ENCODE measurements at regions of chr11 and their contacts with region 1.

Region 1: DNA sequence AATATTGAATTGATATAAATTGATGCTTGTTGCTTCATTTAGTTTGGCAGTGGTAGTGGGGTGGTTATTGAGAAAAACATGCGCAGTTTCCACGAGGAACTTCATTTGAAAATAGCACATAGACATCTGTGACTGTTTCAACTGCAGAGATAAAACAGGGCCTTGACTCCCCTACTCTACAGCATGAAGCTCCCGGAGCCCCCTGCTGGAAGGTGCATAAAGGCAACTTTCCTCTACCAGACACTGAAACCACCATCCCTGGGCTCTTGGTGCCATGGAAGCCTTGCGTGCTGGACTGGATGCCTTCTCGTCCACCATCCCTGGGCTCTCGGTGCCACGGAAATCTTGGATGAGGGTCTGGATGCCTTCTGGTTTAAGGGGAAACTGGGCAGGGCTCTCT is 195.9 kb downstream of the CSNK2A3 start:
- DNase-seq: peak; percentile 64
- ATAC-seq: peak; percentile 47
- H3K4me3 Mint-ChIP-seq: no peak overlapping the region
- H3K27ac Mint-ChIP-seq: no peak overlapping the region
- H3K4me1 Mint-ChIP-seq: peaks cover 15% of the 10 kb centered on the region
- H3K27me3 Mint-ChIP-seq: no peaks in the 10 kb centered on the region
- CTCF ChIP-seq: peak; percentile 46

Region 2: DNA sequence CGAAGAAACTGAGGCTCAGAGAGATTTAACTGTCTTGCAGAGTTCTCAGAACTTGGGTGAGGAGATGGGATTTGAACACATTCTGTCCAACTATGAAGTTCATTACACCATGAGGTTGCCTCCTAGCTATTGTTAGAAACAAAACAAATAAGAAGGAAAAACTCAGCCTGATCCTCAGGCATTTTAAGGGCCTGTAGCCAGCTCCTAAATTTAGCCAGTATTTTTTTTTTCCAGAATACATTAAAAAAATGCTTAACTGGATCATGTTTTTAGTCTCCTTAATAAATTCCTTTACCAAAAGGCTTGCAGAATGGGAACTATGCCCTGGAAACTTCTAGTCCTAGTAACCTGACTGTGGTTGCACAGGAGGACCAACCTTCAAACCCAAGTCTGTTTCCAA is 16.1 kb before region 1 on chr11:
- CTCF ChIA-PET with region 1: interaction called, 12 read pairs
- POLR2A ChIA-PET with region 1: no interaction called
- intact Hi-C with region 1: no loop called
- DNase-seq: no peak
- ATAC-seq: no peak
- H3K4me3 Mint-ChIP-seq: no peak overlapping the region
- H3K27ac Mint-ChIP-seq: no peak overlapping the region
- H3K4me1 Mint-ChIP-seq: peaks cover 14% of the 10 kb centered on the region
- H3K27me3 Mint-ChIP-seq: no peaks in the 10 kb centered on the region
- CTCF ChIP-seq: no peak

Region 3: GRCh38 chr11:11171285-11171684 is 14.1 kb after region 1 on chr11:
- CTCF ChIA-PET with region 1: interaction called, 19 read pairs
- POLR2A ChIA-PET with region 1: no interaction called
- intact Hi-C with region 1: no loop called
- DNase-seq: no peak
- ATAC-seq: no peak
- H3K4me3 Mint-ChIP-seq: no peak overlapping the region
- H3K27ac Mint-ChIP-seq: no peak overlapping the region
- H3K4me1 Mint-ChIP-seq: peaks cover 18% of the 10 kb centered on the region
- H3K27me3 Mint-ChIP-seq: no peaks in the 10 kb centered on the region
- CTCF ChIP-seq: no peak

Region 4: GRCh38 chr11:11182286-11182685 is 25.1 kb after region 1 on chr11:
- CTCF ChIA-PET with region 1: no interaction called
- POLR2A ChIA-PET with region 1: no interaction called
- intact Hi-C with region 1: no loop called
- DNase-seq: no peak
- ATAC-seq: no peak
- H3K4me3 Mint-ChIP-seq: no peak overlapping the region
- H3K27ac Mint-ChIP-seq: no peak overlapping the region
- H3K4me1 Mint-ChIP-seq: no peaks in the 10 kb centered on the region
- H3K27me3 Mint-ChIP-seq: peaks cover 6% of the 10 kb centered on the region
- CTCF ChIP-seq: no peak

Region 5: GRCh38 chr11:11230802-11231562 is 73.8 kb after region 1 on chr11:
- CTCF ChIA-PET with region 1: no interaction called
- POLR2A ChIA-PET with region 1: no interaction called
- intact Hi-C with region 1: no loop called
- DNase-seq: peak; percentile 50
- ATAC-seq: peak; percentile 66
- H3K4me3 Mint-ChIP-seq: no peak overlapping the region
- H3K27ac Mint-ChIP-seq: no peak overlapping the region
- H3K4me1 Mint-ChIP-seq: no peaks in the 10 kb centered on the region
- H3K27me3 Mint-ChIP-seq: peaks cover 5% of the 10 kb centered on the region
- CTCF ChIP-seq: peak; percentile 58

Region 6: GRCh38 chr11:11265994-11266606 is 108.9 kb after region 1 on chr11:
- CTCF ChIA-PET with region 1: no interaction called
- POLR2A ChIA-PET with region 1: no interaction called
- intact Hi-C with region 1: no loop called
- DNase-seq: peak; percentile 74
- ATAC-seq: peak; percentile 84
- H3K4me3 Mint-ChIP-seq: no peak overlapping the region
- H3K27ac Mint-ChIP-seq: no peak overlapping the region
- H3K4me1 Mint-ChIP-seq: peaks cover 3% of the 10 kb centered on the region
- H3K27me3 Mint-ChIP-seq: peaks cover 12% of the 10 kb centered on the region
- CTCF ChIP-seq: peak; percentile 92